Activated CD4-positive, alpha-beta memory T cell treated with anti-CD3 and anti-CD28 coated beads for 36 hours (primary cell): ENCODE measurements at regions of chr12 and their contacts with region 1.

Region 1: DNA sequence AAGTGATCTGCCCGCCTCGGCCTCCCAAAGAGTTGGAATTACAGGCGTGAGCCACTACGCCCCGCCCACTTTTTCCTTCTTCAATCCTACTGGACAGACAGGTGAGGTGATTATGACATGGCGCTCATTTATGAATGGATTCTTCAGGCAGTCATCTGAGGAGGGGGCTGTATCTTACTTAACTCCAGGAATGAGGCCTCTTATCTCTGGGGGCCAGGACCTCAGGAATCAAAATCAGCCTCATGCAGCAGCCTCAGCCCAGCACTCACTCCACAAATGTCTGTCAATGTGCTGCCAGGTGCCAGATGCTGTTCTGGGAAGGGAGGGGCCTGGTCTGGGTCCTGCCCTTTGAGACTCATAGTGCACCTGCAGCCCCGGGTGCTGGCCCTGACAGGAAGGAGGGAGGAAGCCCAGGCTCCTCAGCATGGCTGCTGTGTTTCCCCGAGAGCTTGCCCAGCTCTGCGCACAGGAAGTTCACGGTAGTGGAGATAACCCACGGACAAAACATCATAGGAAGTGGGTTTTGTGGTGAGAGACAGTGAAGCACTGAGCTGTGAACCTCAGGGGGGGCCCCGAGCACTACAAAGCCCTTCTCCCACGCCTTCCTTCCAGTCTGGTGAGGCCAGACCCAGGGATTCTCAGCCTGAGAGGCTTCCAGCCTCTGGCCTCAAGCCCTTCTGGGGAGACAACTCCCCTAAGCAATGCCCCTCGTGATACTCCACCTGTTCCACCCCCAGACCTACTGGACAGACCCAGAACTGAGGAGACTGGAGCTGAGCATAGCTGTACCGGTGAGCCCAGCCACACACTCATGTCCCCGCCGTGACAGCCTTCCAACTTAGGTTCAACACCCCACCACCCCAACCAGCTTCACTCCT is 22.3 kb downstream of the GALNT6 start:
- DNase-seq: peak; percentile 95
- H3K4me3 Mint-ChIP-seq: peak overlapping the region; percentile 61
- H3K27ac Mint-ChIP-seq: peak overlapping the region; percentile 86
- H3K4me1 Mint-ChIP-seq: peaks cover 51% of the 10 kb centered on the region
- H3K27me3 Mint-ChIP-seq: no peaks in the 10 kb centered on the region

Region 2: GRCh38 chr12:51391283-51392162 is 22.6 kb after region 1 on chr12 and contains the start of gene GALNT6:
- CTCF ChIA-PET with region 1: interaction called, 12 read pairs
- POLR2A ChIA-PET with region 1: interaction called, 11 read pairs
- intact Hi-C with region 1: loop called (anchors 1 kb)
- DNase-seq: peak; percentile 71
- H3K4me3 Mint-ChIP-seq: peak within 1 kb of the TSS; percentile 85
- H3K27ac Mint-ChIP-seq: peak within 1 kb of the TSS; percentile 35
- H3K4me1 Mint-ChIP-seq: peaks cover 67% of the 10 kb centered on the region
- H3K27me3 Mint-ChIP-seq: no peaks in the 10 kb centered on the region
- total RNA-seq, gene GALNT6: 13.1 to 15.8 TPM